ENCODE measurements at regions of chr4 and their contacts with region 1.

Region 1: DNA sequence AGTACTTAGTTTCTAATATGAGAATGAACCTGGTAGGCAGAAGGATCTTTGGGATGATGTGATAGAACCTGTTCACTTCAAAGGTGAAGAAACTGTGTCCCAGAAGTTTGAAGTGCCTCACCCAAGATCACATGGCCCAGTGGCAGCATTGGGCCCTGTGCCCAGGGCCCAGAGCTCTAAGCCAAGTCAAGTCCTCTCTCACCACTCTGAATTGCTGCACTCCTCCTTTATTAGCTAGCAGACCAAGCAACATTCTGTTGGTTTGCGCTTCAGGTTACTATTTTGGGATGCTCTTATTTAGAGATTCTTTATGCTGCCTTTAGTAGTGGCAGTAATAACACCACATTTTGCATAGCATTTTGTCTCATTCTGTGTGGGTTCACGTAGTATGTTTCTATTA is 82.7 kb downstream of the PARM1 start:
- DNase-seq: peak in 1 of 2 donors; percentile 67
- ATAC-seq: peak; percentile 90 to 95
- H3K4me3 ChIP-seq: no peak overlapping the region
- H3K27ac ChIP-seq: peak overlapping the region; percentile 19 to 70 (median 26)
- H3K4me1 ChIP-seq: peaks cover 6 to 19% of the 10 kb centered on the region in 2 donors
- H3K27me3 ChIP-seq: no peaks in the 10 kb centered on the region
- CTCF ChIP-seq: no peak
- POLR2A ChIP-seq: no peak

Region 2: DNA sequence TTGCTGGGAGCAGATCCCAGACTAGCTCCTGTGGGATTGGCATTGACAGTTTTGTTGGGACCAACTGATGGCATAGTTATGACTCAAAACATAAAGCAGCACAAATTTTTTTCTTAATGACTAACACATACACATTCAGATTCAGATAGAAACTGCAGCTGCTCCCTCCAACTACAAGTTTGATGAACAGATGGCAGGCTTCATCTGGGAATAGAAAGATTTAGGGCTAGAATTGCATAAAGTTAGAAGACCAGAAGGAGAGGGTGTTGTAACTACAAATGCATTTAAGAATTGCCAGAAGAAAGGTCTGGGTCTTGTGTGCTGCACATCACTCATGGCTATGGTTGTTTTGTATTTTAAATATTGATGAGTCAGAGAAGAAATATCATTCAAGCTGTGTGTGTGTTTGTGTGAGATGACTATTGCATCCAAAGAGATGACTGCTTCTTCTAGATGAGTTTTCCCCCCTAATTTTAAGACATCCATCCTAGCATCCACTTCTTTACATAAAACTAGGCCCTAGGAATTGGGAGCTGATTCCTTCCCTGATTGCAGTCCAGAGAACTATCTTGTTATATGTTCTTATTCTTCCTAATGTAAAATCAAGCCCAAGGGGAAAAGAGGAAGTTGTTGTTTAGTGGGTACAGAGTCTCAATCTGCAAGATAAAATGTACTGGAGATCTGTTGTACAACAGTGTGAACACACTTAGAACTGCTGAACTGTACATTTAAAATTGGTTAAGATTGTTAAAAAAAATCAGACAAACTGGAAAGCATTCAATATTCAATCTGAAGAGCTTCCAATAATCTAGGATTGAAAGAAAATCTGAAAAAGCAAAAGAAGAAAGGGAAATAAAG is 92.4 kb after region 1 on chr4:
- in situ Hi-C with region 1: no loop called
- intact Hi-C with region 1: loop called (anchors 10 kb)
- DNase-seq: no peak
- ATAC-seq: no peak
- H3K4me3 ChIP-seq: no peak overlapping the region
- H3K27ac ChIP-seq: no peak overlapping the region
- H3K4me1 ChIP-seq: no peaks in the 10 kb centered on the region
- H3K27me3 ChIP-seq: no peaks in the 10 kb centered on the region
- CTCF ChIP-seq: no peak
- POLR2A ChIP-seq: no peak

Region 3: GRCh38 chr4:75338352-75338880 is 322.8 kb after region 1 on chr4:
- in situ Hi-C with region 1: no loop called
- intact Hi-C with region 1: no loop called
- DNase-seq: no peak
- ATAC-seq: no peak
- H3K4me3 ChIP-seq: no peak overlapping the region
- H3K27ac ChIP-seq: no peak overlapping the region
- H3K4me1 ChIP-seq: no peaks in the 10 kb centered on the region
- H3K27me3 ChIP-seq: no peaks in the 10 kb centered on the region
- CTCF ChIP-seq: no peak
- POLR2A ChIP-seq: no peak